MCF 10A (cell line): ENCODE measurements at regions of chr1 and their contacts with region 1.

Region 1: GRCh38 chr1:156001682-156002171 is 19.0 kb downstream of the SSR2 start:
- DNase-seq: no peak
- H3K4me3 Mint-ChIP-seq: peak overlapping the region; percentile 74
- H3K27ac Mint-ChIP-seq: peak overlapping the region; percentile 94
- H3K4me1 Mint-ChIP-seq: peaks cover 38% of the 10 kb centered on the region
- H3K27me3 Mint-ChIP-seq: no peaks in the 10 kb centered on the region
- CTCF ChIP-seq: peak; percentile 14

Region 2: GRCh38 chr1:155978325-155978972 is 23.3 kb before region 1 on chr1 and contains the start of gene ARHGEF2:
- CTCF ChIA-PET with region 1: interaction called, 6 read pairs
- POLR2A ChIA-PET with region 1: interaction called, 43 read pairs
- intact Hi-C with region 1: no loop called
- DNase-seq: peak; percentile 89
- H3K4me3 Mint-ChIP-seq: peak within 1 kb of the TSS; percentile 81
- H3K27ac Mint-ChIP-seq: peak within 1 kb of the TSS; percentile 90
- H3K4me1 Mint-ChIP-seq: peaks cover 83% of the 10 kb centered on the region
- H3K27me3 Mint-ChIP-seq: no peaks in the 10 kb centered on the region
- CTCF ChIP-seq: no peak
- total RNA-seq, gene ARHGEF2: 498 and 555 TPM in 2 replicates

Region 3: DNA sequence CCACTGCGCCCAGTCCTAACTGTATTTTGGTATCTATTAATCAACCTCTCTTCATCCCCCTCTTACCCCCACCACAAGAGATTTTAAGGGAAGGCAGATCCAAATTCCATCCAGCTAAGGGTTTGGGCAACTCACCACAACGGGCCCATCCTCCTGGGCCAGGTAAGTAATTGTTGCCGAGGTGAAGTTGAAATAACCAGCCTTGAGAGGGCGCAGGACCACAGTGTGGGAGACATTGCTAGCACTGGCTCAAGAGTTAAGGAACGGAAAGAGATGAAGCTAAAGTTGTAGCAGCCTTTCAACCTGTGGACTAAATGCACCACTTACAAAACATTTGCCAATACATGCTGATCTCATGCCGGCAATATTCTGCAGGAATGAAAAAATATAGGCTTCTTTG is 13.1 kb after region 1 on chr1:
- CTCF ChIA-PET with region 1: interaction called, 5 read pairs
- POLR2A ChIA-PET with region 1: interaction called, 54 read pairs
- intact Hi-C with region 1: no loop called
- DNase-seq: no peak
- H3K4me3 Mint-ChIP-seq: no peak overlapping the region
- H3K27ac Mint-ChIP-seq: no peak overlapping the region
- H3K4me1 Mint-ChIP-seq: peaks cover 26% of the 10 kb centered on the region
- H3K27me3 Mint-ChIP-seq: no peaks in the 10 kb centered on the region
- CTCF ChIP-seq: no peak

Region 4: DNA sequence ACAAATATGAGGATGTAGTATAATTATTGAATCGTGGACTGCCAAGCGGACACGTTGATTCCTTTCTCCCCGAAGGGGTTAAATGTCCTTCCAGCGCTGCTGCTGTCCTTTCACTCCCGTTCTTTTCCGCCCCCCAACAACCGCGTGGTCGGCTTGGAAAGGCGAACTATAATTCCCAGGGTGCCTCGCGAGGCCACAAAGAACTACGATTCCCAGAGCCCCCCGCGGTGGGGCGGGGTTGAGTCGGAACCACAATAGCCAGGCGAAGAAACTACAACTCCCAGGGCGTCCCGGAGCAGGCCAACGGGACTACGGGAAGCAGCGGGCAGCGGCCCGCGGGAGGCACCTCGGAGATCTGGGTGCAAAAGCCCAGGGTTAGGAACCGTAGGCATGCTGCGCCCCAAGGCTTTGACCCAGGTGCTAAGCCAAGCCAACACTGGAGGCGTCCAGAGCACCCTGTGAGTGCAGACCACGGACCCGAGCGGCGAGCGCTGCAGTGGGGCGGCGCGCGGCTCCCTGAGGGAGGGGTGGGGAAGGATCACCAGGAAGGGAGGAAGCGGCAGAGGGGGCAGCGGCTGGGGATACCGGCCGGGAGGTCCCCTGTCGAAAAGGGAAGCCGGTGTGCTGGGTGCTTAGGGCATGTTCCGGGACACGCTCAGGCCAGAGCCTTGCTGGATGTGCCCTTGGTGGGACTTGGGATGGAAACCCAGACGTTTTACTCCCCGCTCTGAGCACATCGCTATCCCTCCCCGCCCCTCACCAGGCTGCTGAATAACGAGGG is 53.0 kb after region 1 on chr1 and contains the start of gene LAMTOR2:
- CTCF ChIA-PET with region 1: interaction called, 5 read pairs
- POLR2A ChIA-PET with region 1: interaction called, 10 read pairs
- intact Hi-C with region 1: loop called (anchors 2 kb)
- DNase-seq: peak; percentile 100
- H3K4me3 Mint-ChIP-seq: peak within 1 kb of the TSS; percentile 99
- H3K27ac Mint-ChIP-seq: peak within 1 kb of the TSS; percentile 95
- H3K4me1 Mint-ChIP-seq: peaks cover 33% of the 10 kb centered on the region
- H3K27me3 Mint-ChIP-seq: no peaks in the 10 kb centered on the region
- CTCF ChIP-seq: no peak
- total RNA-seq, gene LAMTOR2: 88.1 and 104 TPM in 2 replicates

Region 5: GRCh38 chr1:156090822-156091188 is 89.1 kb after region 1 on chr1:
- CTCF ChIA-PET with region 1: interaction called, 18 read pairs
- POLR2A ChIA-PET with region 1: interaction called, 3 read pairs
- intact Hi-C with region 1: no loop called
- DNase-seq: peak; percentile 95
- H3K4me3 Mint-ChIP-seq: no peak overlapping the region
- H3K27ac Mint-ChIP-seq: no peak overlapping the region
- H3K4me1 Mint-ChIP-seq: peaks cover 8% of the 10 kb centered on the region
- H3K27me3 Mint-ChIP-seq: no peaks in the 10 kb centered on the region
- CTCF ChIP-seq: peak; percentile 98

Region 6: GRCh38 chr1:156391148-156391677 is 389.5 kb after region 1 on chr1:
- CTCF ChIA-PET with region 1: no interaction called
- POLR2A ChIA-PET with region 1: no interaction called
- intact Hi-C with region 1: no loop called
- DNase-seq: no peak
- H3K4me3 Mint-ChIP-seq: no peak overlapping the region
- H3K27ac Mint-ChIP-seq: no peak overlapping the region
- H3K4me1 Mint-ChIP-seq: no peaks in the 10 kb centered on the region
- H3K27me3 Mint-ChIP-seq: no peaks in the 10 kb centered on the region
- CTCF ChIP-seq: no peak